Activated CD8-positive, alpha-beta memory T cell treated with anti-CD3 and anti-CD28 coated beads, Interleukin-2, amount 10 ng/mL, durations not matched to agents 7 days and 5 days (primary cell): ENCODE measurements at regions of chr9 and their contacts with region 1.

Region 1: DNA sequence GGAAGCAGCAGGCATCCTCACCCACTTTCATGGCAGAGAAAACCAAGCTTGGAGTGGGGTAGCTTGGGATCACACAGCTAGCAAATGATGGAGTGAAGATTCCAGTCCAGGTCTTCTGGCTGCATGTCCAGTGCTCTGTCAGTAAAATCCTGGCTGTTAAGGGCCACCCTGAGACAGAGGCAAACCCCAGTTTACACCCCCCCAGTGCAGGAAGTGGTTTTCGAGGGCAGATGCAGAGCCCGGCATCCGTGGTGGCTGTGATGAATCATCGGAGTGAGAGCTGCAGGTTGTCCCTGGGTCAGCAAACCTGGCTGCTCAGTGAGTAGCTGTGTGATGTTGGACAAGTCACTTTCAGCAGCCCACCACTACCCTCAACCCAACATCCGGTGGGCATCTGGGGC is 115.4 kb downstream of the RGS3 start:
- DNase-seq: peak; percentile 97
- ATAC-seq: peak; percentile 78
- H3K4me3 Mint-ChIP-seq: peak overlapping the region; percentile 65
- H3K27ac Mint-ChIP-seq: peak overlapping the region; percentile 95
- H3K4me1 Mint-ChIP-seq: peaks cover 65% of the 10 kb centered on the region
- H3K27me3 Mint-ChIP-seq: no peaks in the 10 kb centered on the region

Region 2: DNA sequence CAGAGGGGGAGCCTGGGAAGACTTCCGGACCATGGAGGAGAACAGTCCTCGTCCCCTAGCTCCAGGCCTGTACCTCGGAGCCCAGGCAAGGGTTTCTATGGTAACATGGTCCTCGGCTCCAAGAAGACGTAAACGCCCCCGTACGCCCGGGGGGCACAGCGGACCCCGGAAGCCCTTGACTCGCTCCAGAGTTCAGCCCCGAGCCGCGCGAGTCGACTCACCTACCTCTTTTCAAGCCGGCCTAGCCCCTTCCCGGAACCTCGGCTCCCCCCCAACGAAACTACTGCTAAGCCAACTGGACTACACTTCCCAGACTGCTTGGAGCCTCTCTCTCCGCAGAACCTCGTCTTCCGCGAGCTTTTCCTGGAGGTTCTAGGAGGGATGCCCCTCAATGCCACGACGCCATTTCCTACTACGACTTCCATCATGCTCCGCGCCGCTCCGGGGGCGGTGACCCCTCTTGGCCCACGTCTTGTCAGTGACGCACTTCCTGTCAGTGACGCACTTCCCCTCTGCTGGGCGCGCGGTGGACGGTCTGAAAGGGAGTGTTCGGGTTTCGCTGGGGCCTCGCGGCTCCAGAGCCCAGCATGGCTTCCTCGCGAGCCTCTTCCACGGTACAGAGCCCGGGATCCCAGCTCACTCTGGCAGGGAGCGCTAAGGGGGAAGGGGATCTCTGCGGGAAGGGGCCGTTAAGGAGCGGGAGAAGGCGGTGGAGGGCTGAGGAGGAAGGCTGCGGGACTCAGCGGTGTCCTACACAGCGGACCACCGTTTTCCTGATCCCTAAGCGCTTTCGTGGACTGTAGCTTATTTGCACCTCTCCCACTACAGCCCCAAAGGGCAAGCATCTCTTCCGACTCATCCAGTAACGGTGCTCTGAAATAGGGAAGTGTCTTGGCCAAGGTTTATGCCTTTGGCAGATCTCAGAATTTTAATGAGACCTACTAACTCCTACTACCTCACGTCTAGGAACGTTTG is 303.4 kb before region 1 on chr9 and contains the starts of genes CDC26 and PRPF4:
- CTCF ChIA-PET with region 1: interaction called, 10 read pairs
- DNase-seq: peak; percentile 98
- ATAC-seq: peak; percentile 96
- H3K4me3 Mint-ChIP-seq: no peak within 1 kb of the TSS
- H3K27ac Mint-ChIP-seq: no peak within 1 kb of the TSS
- H3K4me1 Mint-ChIP-seq: peaks cover 32% of the 10 kb centered on the region
- H3K27me3 Mint-ChIP-seq: no peaks in the 10 kb centered on the region
- total RNA-seq, gene CDC26: 25.6 to 33.6 TPM
- total RNA-seq, gene PRPF4: 34.0 to 43.4 TPM

Region 3: DNA sequence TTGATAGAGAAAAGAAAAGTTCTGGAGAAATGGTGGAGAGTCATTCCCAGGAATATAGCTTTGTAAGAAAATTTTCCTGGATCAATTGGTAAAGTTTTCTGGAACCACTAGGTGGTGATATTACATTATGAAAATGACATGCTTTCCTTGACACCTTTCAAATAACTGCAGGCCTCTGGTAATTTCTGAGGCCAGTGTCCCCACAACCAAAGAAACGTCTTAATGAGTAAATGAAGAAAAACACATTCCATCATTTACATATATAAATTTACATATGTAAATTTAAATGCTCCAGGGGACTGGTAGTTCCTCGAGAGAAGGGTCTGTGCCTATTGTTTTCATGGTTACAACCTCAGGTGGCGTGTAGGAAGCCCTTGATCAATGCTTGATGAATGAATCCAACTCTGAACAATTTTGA is 132.6 kb before region 1 on chr9:
- CTCF ChIA-PET with region 1: interaction called, 50 read pairs
- DNase-seq: no peak
- ATAC-seq: no peak
- H3K4me3 Mint-ChIP-seq: no peak overlapping the region
- H3K27ac Mint-ChIP-seq: no peak overlapping the region
- H3K4me1 Mint-ChIP-seq: peaks cover 2% of the 10 kb centered on the region
- H3K27me3 Mint-ChIP-seq: no peaks in the 10 kb centered on the region

Region 4: DNA sequence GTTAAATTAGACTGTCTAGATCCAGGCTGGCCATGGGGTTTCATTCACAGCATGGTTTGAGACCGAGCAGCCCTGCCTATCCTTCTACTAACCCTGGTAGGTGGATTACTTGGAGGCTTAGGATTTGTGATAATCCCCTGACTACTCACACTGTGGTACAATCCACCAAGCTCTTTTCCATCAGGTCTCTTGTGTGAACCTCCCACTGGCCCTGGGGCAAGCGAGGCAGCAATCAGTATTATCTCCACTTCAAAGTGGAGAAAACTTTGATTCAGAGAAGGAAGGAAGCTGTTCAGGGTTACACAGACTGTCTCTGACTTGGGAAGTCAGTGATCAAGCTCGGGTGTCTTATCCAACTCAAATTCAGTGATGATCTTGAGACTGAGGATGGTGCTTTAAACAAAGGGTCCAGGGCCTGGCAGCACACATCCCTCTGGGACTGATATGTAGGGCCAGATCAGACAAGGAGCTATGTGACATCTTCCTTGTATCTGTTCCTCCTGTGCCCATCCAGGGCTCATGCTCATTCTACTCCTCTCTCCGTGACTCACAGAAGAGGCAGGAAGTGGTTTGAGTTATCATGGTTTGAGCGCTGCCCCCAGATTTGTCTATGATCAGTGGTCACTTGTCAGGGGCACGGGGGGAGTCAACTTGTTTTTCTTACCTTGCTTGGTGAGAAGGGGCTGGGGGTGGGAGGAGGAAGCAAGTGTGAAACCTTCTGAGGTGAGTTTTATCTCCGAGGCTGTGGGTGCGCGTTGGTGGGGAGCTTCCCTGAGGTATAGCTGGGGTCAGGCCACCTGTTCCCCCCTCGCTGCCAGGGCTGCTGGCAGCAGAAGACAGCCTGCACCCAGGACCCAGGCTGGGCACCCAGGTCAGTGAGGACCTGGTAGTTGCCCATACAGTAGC is 66.8 kb before region 1 on chr9:
- CTCF ChIA-PET with region 1: interaction called, 105 read pairs
- DNase-seq: peak; percentile 93
- ATAC-seq: peak; percentile 74
- H3K4me3 Mint-ChIP-seq: peak overlapping the region; percentile 42
- H3K27ac Mint-ChIP-seq: peak overlapping the region; percentile 87
- H3K4me1 Mint-ChIP-seq: peaks cover 57% of the 10 kb centered on the region
- H3K27me3 Mint-ChIP-seq: no peaks in the 10 kb centered on the region

Region 5: DNA sequence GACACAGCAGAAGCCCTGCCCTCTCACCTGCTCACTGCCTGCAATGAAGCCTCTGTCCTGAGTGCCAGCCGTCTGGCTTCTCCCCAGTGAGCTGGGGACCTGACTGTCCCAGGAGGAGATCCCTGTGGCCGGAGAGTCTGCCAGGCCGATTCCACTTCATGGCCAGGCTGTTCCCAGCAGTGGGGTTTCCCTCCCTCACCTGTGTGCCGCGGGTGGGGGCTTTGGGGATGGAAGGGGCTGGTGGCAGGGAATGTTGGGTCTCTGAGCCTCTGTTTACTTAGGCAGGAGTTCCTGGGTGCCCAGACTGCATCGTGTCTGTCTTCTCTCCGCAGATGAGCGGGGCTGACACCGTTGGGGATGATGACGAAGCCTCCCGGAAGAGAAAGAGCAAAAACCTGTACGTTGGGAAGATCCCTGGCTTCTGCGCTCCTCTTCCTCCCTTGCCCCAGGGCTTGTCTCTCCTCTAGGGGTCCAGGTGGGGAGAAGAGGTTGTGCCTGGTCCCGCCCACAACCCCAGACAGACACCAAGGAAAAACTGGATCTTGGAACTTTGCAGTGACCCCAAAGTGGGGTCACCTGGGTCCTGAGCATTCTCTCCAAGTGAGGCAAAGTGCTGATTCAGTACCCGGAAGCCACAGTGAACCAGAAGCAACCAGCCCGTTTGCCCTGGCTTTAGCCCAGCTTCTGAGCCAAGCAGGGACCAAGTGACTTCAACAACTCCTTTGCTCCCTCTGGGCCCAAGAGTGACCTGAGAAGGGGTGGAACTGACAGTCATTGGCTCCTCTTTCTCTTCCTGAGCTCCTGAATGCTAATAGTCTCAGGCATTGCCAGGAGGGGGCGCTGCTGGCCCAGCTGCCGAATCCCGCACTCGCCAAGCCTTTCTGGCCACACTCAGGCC is 12.4 kb after region 1 on chr9:
- CTCF ChIA-PET with region 1: interaction called, 34 read pairs
- DNase-seq: peak; percentile 68
- ATAC-seq: peak; percentile 56
- H3K4me3 Mint-ChIP-seq: no peak overlapping the region
- H3K27ac Mint-ChIP-seq: peak overlapping the region; percentile 2
- H3K4me1 Mint-ChIP-seq: peaks cover 34% of the 10 kb centered on the region
- H3K27me3 Mint-ChIP-seq: no peaks in the 10 kb centered on the region